Mammary epithelial cell (primary cell): ENCODE measurements at regions of chr20 and their contacts with region 1.

Region 1: DNA sequence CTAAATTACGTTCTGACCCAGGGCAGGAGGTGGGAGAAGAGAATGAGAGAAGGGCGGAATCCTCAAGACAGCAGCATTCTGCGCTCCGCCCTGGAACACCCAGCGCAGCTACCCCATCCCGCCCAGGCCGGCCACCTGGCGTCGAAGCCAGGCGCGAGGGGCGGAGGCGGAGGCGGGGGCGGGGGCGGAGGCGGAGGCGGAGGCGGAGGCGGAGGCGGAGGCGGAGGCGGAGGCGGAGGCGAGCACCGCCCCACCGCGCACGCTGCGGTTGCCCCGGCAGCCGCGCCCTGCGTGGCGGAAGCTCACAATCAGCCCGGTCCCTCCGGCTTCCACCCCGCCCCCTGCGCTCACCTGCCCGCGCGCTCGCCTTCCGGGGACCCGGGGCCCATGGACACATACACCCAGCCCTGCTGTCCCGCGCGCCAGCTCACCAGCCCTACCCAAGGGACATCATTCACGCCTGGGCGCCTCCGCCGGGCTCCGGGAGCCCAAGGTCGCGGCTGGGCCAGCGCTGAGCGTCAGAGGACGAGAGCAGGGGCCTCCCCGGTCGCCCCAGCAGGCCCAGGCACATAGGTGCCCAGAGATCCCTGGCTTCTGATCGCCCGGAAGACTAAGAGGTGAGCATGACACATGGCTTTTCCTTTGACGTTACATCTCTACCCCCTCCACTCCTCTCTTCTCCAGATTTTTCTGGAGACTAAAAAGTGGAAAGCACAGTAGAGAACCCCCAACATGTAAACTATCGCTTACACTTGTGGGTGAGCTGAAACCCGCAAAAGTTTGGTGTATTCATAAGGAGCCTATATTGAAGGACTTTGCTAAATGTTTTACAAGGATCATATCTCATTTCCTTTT is at the start of gene ANKEF1:
- DNase-seq: peak; percentile 71
- H3K4me3 ChIP-seq: peak within 1 kb of the TSS; percentile 40 to 74 (median 61)
- H3K27ac ChIP-seq: peak within 1 kb of the TSS; percentile 38
- H3K4me1 ChIP-seq: peaks cover 8% of the 10 kb centered on the region
- H3K27me3 ChIP-seq: no peaks in the 10 kb centered on the region
- CTCF ChIP-seq: no peak
- total RNA-seq, gene ANKEF1: 4.8 to 7.2 TPM

Region 2: GRCh38 chr20:10077081-10077471 is 42.1 kb after region 1 on chr20:
- CTCF ChIA-PET with region 1: no interaction called
- dilution Hi-C with region 1: no loop called
- in situ Hi-C with region 1: no loop called
- intact Hi-C with region 1: loop called (anchors 5 kb)
- DNase-seq: no peak
- H3K4me3 ChIP-seq: no peak overlapping the region
- H3K27ac ChIP-seq: peak overlapping the region; percentile 8
- H3K4me1 ChIP-seq: peaks cover 69% of the 10 kb centered on the region
- H3K27me3 ChIP-seq: no peaks in the 10 kb centered on the region
- CTCF ChIP-seq: peak; percentile 30 to 35